Posterior vena cava (tissue), 2 donors: ENCODE measurements at regions of chr7 and their contacts with region 1.

Region 1: DNA sequence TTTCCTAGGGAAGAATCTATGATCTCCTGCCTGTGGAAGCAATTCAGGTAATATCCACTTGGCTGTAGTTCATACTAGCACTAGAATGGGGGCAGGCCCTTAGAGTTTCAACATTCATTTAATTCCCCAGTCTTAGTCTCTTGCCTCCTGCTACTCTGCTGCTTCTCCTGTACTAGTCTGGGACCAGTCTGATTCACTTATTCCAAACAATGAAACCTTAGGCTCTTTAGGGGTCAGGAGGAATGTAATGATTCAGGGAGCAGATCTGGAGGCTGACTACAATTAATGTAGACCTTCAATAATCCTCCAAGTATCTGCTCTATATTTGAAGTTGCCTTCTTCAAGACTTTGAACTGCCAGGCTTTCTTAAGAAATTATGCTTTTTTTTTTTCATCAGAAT is 101.8 kb downstream of the GNAT3 start:
- DNase-seq: no peak

Region 2: GRCh38 chr7:80114159-80114558 is 295.9 kb before region 1 on chr7:
- intact Hi-C with region 1: no loop called
- DNase-seq: no peak

Region 3: GRCh38 chr7:81402227-81402626 is 992.1 kb after region 1 on chr7:
- intact Hi-C with region 1: loop called in 1 of 2 experiments (anchors 10 kb)
- DNase-seq: no peak